Panc1 (cell line): ENCODE measurements at regions of chr19 and their contacts with region 1.

Region 1: GRCh38 chr19:51660975-51661600 is 14.5 kb upstream of the SIGLEC14 start:
- DNase-seq: no peak
- ATAC-seq: peak; percentile 80; the same call in 1 of the 2 replicates
- H3K4me3 ChIP-seq: no peak overlapping the region
- H3K27ac ChIP-seq: no peak overlapping the region
- H3K4me1 ChIP-seq: no peaks in the 10 kb centered on the region
- H3K27me3 ChIP-seq: peaks cover 2% of the 10 kb centered on the region; the same call in 1 of the 2 replicates
- CTCF ChIP-seq: peak; percentile 65

Region 2: DNA sequence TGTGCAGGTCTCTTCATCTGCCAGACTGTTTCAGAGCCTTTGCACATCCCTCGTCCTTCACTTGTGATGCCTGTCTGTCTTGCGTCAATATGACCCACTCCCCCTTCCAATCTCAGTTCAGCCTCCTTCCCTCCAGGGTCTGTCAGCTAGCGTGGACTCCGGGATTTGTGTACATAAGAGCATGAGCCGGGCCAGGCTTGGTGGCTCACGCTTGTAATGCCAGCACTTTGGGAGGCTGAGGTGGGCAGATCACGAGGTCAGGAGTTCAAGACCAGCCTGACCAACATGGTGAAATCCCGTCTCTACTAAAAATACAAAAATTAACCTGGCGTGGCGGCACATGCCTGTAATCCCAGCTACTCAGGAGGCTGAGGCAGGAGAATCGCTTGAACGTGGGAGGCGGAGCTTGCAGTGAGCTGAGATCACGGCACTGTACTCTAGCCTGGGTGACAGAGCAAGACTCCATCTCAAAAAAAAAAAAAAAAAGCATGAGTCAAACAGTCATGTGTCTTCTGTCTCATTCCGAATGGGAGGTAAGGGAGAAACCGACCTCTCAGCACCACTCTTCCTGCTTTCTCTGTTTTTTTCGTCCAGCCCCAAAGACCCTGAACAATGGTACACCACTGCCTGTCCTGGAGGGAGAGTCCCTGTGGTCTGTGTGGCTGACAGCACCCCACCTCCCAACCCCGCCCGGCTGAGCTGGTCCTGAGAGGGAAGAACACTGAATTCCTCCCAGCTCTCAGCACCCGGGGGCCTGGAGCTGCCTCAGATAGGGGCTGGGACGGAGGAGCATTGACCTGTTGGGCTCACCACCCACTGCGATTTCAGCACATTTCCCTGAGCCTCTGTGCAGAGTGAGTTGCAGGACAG is 538.7 kb before region 1 on chr19:
- CTCF ChIA-PET with region 1: interaction called, 14 read pairs
- POLR2A ChIA-PET with region 1: no interaction called
- in situ Hi-C with region 1: no loop called
- intact Hi-C with region 1: no loop called
- DNase-seq: no peak
- ATAC-seq: no peak
- H3K4me3 ChIP-seq: no peak overlapping the region
- H3K27ac ChIP-seq: no peak overlapping the region
- H3K4me1 ChIP-seq: no peaks in the 10 kb centered on the region
- H3K27me3 ChIP-seq: peaks cover under 1% of the 10 kb centered on the region; the same call in 1 of the 2 replicates
- CTCF ChIP-seq: no peak

Region 3: GRCh38 chr19:51473009-51473707 is 187.9 kb before region 1 on chr19:
- CTCF ChIA-PET with region 1: interaction called, 11 read pairs
- POLR2A ChIA-PET with region 1: no interaction called
- in situ Hi-C with region 1: no loop called
- intact Hi-C with region 1: loop called (anchors 2 kb)
- DNase-seq: peak; percentile 38
- ATAC-seq: peak; percentile 86
- H3K4me3 ChIP-seq: no peak overlapping the region
- H3K27ac ChIP-seq: no peak overlapping the region
- H3K4me1 ChIP-seq: no peaks in the 10 kb centered on the region
- H3K27me3 ChIP-seq: no peaks in the 10 kb centered on the region; the same call in 1 of the 2 replicates
- CTCF ChIP-seq: peak; percentile 86

Region 4: GRCh38 chr19:53612755-53613154 is 1951.7 kb after region 1 on chr19:
- CTCF ChIA-PET with region 1: no interaction called
- POLR2A ChIA-PET with region 1: no interaction called
- in situ Hi-C with region 1: no loop called
- intact Hi-C with region 1: no loop called
- DNase-seq: no peak
- ATAC-seq: no peak
- H3K4me3 ChIP-seq: no peak overlapping the region
- H3K27ac ChIP-seq: no peak overlapping the region
- H3K4me1 ChIP-seq: no peaks in the 10 kb centered on the region
- H3K27me3 ChIP-seq: no peaks in the 10 kb centered on the region
- CTCF ChIP-seq: no peak